ENCODE measurements at regions of chr7 and their contacts with region 1.

Region 1: DNA sequence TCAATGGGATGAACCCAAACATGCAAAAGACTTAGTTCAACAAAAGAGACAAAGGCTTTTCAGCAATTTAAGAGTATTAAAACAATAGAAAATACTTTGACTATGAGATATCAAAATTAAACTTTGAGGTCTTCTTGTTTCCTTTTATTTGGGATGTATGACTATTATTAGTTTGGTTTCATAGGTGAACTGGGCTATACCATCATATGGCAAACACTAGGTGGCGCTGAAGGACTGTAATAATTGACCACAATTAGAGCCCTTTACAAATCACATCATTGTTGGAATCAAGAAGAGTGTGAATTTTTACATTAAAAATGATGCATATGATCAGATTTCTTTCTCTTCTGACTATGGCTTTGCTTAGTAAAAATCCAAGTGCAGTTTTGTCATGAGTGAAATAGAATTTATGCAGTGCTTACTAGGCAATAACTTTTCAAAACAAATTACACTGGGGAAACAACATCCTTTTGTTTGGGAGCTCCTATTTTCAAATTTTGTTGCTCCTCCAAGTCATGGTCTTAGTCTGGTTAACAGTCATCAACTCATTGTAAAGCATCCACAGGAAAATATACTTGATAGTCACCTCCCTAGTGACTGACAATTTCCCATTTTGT is 14.7 kb upstream of the NXPH1 start:
- DNase-seq: peak in 10 of 14 experiments; percentile 10 to 74 (median 32)
- ATAC-seq: peak; percentile 48
- H3K4me3 ChIP-seq: no peak overlapping the region
- H3K4me3 Mint-ChIP-seq: no peak overlapping the region
- H3K27ac ChIP-seq: no peak overlapping the region
- H3K27ac Mint-ChIP-seq: no peak overlapping the region
- H3K4me1 ChIP-seq: no peaks in the 10 kb centered on the region
- H3K4me1 Mint-ChIP-seq: no peaks in the 10 kb centered on the region
- H3K27me3 ChIP-seq: no peaks in the 10 kb centered on the region
- H3K27me3 Mint-ChIP-seq: peaks cover 26% of the 10 kb centered on the region
- CTCF ChIP-seq: peak; percentile 90

Region 2: GRCh38 chr7:8528311-8528710 is 109.6 kb after region 1 on chr7:
- CTCF ChIA-PET with region 1: no interaction called
- POLR2A ChIA-PET with region 1: no interaction called
- intact Hi-C with region 1: no loop called
- DNase-seq: no peak
- ATAC-seq: no peak
- H3K4me3 ChIP-seq: no peak overlapping the region
- H3K4me3 Mint-ChIP-seq: no peak overlapping the region
- H3K27ac ChIP-seq: no peak overlapping the region
- H3K27ac Mint-ChIP-seq: no peak overlapping the region
- H3K4me1 ChIP-seq: no peaks in the 10 kb centered on the region
- H3K4me1 Mint-ChIP-seq: no peaks in the 10 kb centered on the region
- H3K27me3 ChIP-seq: no peaks in the 10 kb centered on the region
- H3K27me3 Mint-ChIP-seq: no peaks in the 10 kb centered on the region
- CTCF ChIP-seq: no peak

Region 3: GRCh38 chr7:10412422-10413019 is 1993.8 kb after region 1 on chr7:
- CTCF ChIA-PET with region 1: no interaction called
- POLR2A ChIA-PET with region 1: no interaction called
- intact Hi-C with region 1: loop called in 1 of 2 experiments (anchors 5 kb)
- DNase-seq: peak in 3 of 14 experiments; percentile 15 to 20 (median 19)
- ATAC-seq: no peak
- H3K4me3 ChIP-seq: no peak overlapping the region
- H3K4me3 Mint-ChIP-seq: no peak overlapping the region
- H3K27ac ChIP-seq: no peak overlapping the region
- H3K27ac Mint-ChIP-seq: no peak overlapping the region
- H3K4me1 ChIP-seq: no peaks in the 10 kb centered on the region
- H3K4me1 Mint-ChIP-seq: no peaks in the 10 kb centered on the region
- H3K27me3 ChIP-seq: no peaks in the 10 kb centered on the region
- H3K27me3 Mint-ChIP-seq: no peaks in the 10 kb centered on the region
- CTCF ChIP-seq: peak; percentile 56